HepG2 (cell line): ENCODE measurements at regions of chr6 and their contacts with region 1.

Region 1: GRCh38 chr6:104771258-104771832 is 88.4 kb downstream of the HACE1 start:
- DNase-seq: peak; percentile 10
- ATAC-seq: peak; percentile 76
- H3K4me3 ChIP-seq: no peak overlapping the region
- H3K27ac ChIP-seq: no peak overlapping the region
- H3K4me1 ChIP-seq: no peaks in the 10 kb centered on the region
- H3K27me3 ChIP-seq: no peaks in the 10 kb centered on the region
- CTCF ChIP-seq: peak; percentile 48
- EP300 ChIP-seq: no peak
- POLR2A ChIP-seq: no peak
- RAD21 ChIP-seq: no peak

Region 2: DNA sequence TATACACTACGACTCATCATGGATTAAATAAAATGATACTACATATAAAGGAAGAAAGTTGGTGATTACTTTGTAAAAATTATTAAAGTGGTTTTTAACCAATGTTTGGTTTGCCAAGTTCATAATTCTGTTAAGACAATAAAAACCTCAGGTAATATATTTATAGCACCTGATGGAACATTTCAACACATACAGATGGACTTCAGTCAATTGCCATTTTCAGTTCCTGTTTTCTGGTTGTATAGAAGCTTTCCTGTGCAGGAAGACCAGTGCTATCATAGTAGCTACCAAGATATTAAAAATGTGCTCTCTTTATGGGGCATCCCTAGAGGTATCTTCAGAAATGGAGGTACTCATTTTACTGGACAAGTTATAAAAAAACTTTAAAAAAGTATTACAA is 1691.5 kb before region 1 on chr6:
- CTCF ChIA-PET with region 1: no interaction called
- POLR2A ChIA-PET with region 1: no interaction called
- in situ Hi-C with region 1: no loop called
- intact Hi-C with region 1: no loop called
- DNase-seq: no peak
- ATAC-seq: no peak
- H3K4me3 ChIP-seq: no peak overlapping the region
- H3K27ac ChIP-seq: no peak overlapping the region
- H3K4me1 ChIP-seq: no peaks in the 10 kb centered on the region
- H3K27me3 ChIP-seq: no peaks in the 10 kb centered on the region
- CTCF ChIP-seq: no peak
- EP300 ChIP-seq: no peak
- POLR2A ChIP-seq: no peak
- RAD21 ChIP-seq: no peak

Region 3: GRCh38 chr6:104682722-104683643 is 88.4 kb before region 1 on chr6:
- CTCF ChIA-PET with region 1: interaction called, 40 read pairs
- POLR2A ChIA-PET with region 1: no interaction called
- in situ Hi-C with region 1: loop called (anchors 5 kb)
- intact Hi-C with region 1: loop called (anchors 1 kb)
- DNase-seq: peak; percentile 40
- ATAC-seq: peak; percentile 92
- H3K4me3 ChIP-seq: no peak overlapping the region
- H3K27ac ChIP-seq: no peak overlapping the region
- H3K4me1 ChIP-seq: no peaks in the 10 kb centered on the region
- H3K27me3 ChIP-seq: 0 out of 5 replicates have a peak, but pooled peaks cover 0 to 4% of the 10 kb centered on the region in 2 experiments
- CTCF ChIP-seq: peak; percentile 83
- EP300 ChIP-seq: no peak
- POLR2A ChIP-seq: no peak
- RAD21 ChIP-seq: peak; percentile 64